ENCODE measurements at regions of chr4 and their contacts with region 1.

Region 1: DNA sequence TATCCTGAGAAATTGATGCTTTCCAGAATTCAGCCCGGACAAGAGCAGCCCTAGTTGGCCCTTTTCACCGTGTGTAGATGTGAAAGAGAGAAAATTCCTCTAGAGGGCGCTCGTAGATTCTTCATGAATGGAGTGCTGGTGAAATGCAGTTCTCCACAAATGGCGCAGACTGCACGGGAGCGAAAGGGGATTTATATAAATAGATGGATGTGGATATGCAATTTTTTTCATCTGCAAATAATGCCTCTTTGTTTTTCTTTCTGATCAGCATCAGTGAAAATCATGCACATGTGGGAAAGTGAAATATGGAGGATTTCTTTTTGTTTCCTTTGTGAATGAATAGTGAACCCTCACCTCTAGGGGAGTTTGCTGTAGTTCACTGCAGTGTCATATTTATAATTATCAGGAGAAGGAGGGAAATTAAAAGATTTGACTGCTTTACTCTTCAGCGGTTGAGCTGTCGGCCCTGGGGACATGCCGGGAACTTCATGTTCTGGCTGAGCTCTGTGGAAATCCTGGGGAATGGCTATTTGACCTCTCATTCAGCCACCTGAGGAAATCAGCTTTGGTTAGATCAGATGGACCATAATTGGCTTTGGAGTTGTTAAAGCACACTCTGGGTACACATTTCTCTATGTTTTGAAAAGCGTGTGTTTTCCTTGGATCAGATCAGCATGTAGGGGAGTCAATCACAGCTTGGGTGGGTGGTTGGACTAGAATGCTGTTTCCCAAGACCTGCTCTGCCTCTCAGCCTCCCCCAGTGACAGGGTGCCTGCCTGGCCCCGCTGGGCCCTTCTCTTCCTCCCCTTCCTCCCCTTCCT is 115.0 kb upstream of the SHISA3 start:
- DNase-seq: no peak
- ATAC-seq: peak; percentile 85
- H3K4me3 ChIP-seq: no peak overlapping the region
- H3K27ac ChIP-seq: no peak overlapping the region
- H3K4me1 ChIP-seq: no peaks in the 10 kb centered on the region
- H3K27me3 ChIP-seq: no peaks in the 10 kb centered on the region

Region 2: GRCh38 chr4:42371306-42372252 is 89.3 kb after region 1 on chr4:
- intact Hi-C with region 1: loop called in 1 of 2 experiments (anchors 5 kb)
- DNase-seq: no peak
- ATAC-seq: no peak
- H3K4me3 ChIP-seq: no peak overlapping the region
- H3K27ac ChIP-seq: no peak overlapping the region
- H3K4me1 ChIP-seq: no peaks in the 10 kb centered on the region
- H3K27me3 ChIP-seq: no peaks in the 10 kb centered on the region

Region 3: GRCh38 chr4:42453612-42454011 is 171.3 kb after region 1 on chr4:
- intact Hi-C with region 1: no loop called
- DNase-seq: no peak
- ATAC-seq: no peak
- H3K4me3 ChIP-seq: no peak overlapping the region
- H3K27ac ChIP-seq: no peak overlapping the region
- H3K4me1 ChIP-seq: no peaks in the 10 kb centered on the region
- H3K27me3 ChIP-seq: no peaks in the 10 kb centered on the region

Region 4: DNA sequence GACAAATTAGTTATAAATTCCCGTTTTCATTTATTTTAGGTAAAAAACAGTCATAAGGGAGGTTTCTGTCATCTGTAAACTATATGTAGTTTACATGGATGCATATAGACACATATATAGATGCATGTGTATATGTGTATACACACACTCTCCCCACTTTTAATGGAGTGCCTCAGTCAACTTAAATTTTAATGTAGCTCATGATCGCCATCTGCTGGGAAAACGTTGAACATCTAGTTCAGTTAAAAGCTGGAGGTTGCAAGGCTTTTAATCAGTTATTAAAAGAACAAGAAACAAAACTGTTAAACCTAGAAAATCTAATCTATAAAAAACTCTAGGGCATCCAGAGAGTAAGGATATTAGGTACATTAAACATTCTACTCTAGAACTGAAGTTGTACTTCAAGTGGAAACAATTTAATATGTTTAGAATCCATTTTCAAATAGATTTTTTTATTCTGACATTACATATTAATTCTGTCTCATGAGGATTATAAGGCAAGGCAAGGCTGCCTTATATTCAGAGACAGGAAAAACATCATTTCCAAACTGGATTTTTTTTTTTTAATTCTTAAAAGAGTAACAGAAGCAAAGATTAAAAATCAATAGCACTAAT is 237.6 kb after region 1 on chr4:
- intact Hi-C with region 1: loop called (anchors 2 to 5 kb)
- DNase-seq: no peak
- ATAC-seq: no peak
- H3K4me3 ChIP-seq: no peak overlapping the region
- H3K27ac ChIP-seq: no peak overlapping the region
- H3K4me1 ChIP-seq: no peaks in the 10 kb centered on the region
- H3K27me3 ChIP-seq: no peaks in the 10 kb centered on the region

Region 5: DNA sequence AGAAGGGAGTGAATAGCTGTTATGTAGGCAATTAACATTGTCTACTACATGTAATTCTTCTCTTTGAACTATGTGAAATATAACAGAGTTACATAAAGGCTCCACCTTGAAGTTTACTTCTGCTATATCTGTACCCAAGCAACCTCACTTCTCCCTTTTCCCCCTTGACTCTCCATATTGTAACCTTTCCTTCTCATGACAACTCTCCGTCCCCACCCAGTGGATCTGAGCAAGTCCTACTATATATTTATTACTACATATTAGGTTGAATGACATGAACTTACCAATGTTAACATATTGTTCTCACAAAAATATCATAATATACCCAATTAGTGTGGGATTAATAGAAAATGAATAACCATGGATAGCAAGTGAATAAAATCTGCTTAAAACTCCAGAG is 467.8 kb after region 1 on chr4:
- intact Hi-C with region 1: no loop called
- DNase-seq: no peak
- ATAC-seq: no peak
- H3K4me3 ChIP-seq: no peak overlapping the region
- H3K27ac ChIP-seq: no peak overlapping the region
- H3K4me1 ChIP-seq: peaks cover 0 to 2% of the 10 kb centered on the region in 2 donors
- H3K27me3 ChIP-seq: no peaks in the 10 kb centered on the region

Measured in aorta (tissue), 5 donors.